CD14-positive monocyte (primary cell): ENCODE measurements at regions of chr3 and their contacts with region 1.

Region 1: GRCh38 chr3:167882067-167882667 is 146.6 kb downstream of the SERPINI1 start:
- DNase-seq: peak; percentile 21 to 61 (median 50)
- H3K4me3 ChIP-seq: peak overlapping the region in 1 of 3 experiments; percentile 30
- H3K4me3 Mint-ChIP-seq: peak overlapping the region in 1 of 2 donors; percentile 18
- H3K27ac ChIP-seq: no peak overlapping the region
- H3K27ac Mint-ChIP-seq: no peak overlapping the region
- H3K4me1 ChIP-seq: peaks cover 3 to 4% of the 10 kb centered on the region in 2 donors
- H3K4me1 Mint-ChIP-seq: peaks cover 4% of the 10 kb centered on the region
- H3K27me3 ChIP-seq: no peaks in the 10 kb centered on the region
- H3K27me3 Mint-ChIP-seq: peaks cover 0 to 2% (median 0%) of the 10 kb centered on the region in 3 donors
- CTCF ChIP-seq: peak; percentile 80

Region 2: DNA sequence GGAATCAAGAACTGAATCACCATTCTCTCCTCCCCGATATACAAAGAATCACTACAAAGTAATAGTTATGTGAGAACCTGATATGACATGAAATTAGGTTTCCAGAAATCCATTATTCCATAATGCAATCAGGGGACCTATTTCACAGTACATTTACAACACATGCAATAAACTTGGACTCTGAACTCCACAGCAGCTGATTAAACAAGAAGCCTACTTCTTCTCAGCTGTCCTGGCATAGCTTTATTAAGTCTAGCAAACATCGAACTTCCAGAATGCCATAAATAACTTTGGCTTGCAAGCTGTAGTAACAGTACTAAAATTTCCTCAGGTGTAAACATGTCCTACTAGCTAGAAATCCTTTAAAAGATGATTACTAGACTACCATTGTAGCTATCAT is 165.2 kb before region 1 on chr3:
- intact Hi-C with region 1: loop called in 1 of 2 experiments (anchors 10 kb)
- DNase-seq: no peak
- H3K4me3 ChIP-seq: no peak overlapping the region
- H3K4me3 Mint-ChIP-seq: no peak overlapping the region
- H3K27ac ChIP-seq: no peak overlapping the region
- H3K27ac Mint-ChIP-seq: no peak overlapping the region
- H3K4me1 ChIP-seq: no peaks in the 10 kb centered on the region
- H3K4me1 Mint-ChIP-seq: no peaks in the 10 kb centered on the region
- H3K27me3 ChIP-seq: no peaks in the 10 kb centered on the region
- H3K27me3 Mint-ChIP-seq: no peaks in the 10 kb centered on the region
- CTCF ChIP-seq: no peak

Region 3: DNA sequence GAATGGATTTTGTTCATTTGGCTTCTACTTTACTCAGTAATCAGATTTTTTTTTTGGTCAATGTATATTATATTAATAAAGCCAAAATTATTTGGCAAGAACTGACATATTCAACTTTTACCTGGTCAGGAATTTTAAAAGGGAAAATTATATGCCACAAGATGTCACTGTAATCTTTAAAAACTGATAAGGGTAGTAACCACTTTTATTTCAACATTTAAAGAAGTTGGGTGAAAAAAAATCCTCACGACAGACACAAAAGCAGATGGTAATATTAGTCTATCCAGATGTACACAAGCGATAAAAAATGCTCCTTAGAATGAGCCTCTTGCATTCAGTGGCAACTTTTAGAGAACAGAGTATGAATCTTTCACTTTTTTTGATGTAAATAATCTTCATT is 44.7 kb before region 1 on chr3:
- intact Hi-C with region 1: loop called (anchors 5 kb)
- DNase-seq: peak in 2 of 3 donors; percentile 6 to 29
- H3K4me3 ChIP-seq: no peak overlapping the region
- H3K4me3 Mint-ChIP-seq: peak overlapping the region in 1 of 2 donors; percentile 39
- H3K27ac ChIP-seq: no peak overlapping the region
- H3K27ac Mint-ChIP-seq: no peak overlapping the region
- H3K4me1 ChIP-seq: no peaks in the 10 kb centered on the region
- H3K4me1 Mint-ChIP-seq: peaks cover 8% of the 10 kb centered on the region
- H3K27me3 ChIP-seq: no peaks in the 10 kb centered on the region
- H3K27me3 Mint-ChIP-seq: no peaks in the 10 kb centered on the region
- CTCF ChIP-seq: peak; percentile 39